ENCODE measurements at regions of chr1 and their contacts with region 1.

Region 1: GRCh38 chr1:193190096-193190744 is 3.8 kb upstream of the B3GALT2 start:
- DNase-seq: no peak
- ATAC-seq: no peak

Region 2: GRCh38 chr1:192998536-192998935 is 191.7 kb before region 1 on chr1:
- intact Hi-C with region 1: no loop called
- DNase-seq: no peak
- ATAC-seq: no peak

Region 3: DNA sequence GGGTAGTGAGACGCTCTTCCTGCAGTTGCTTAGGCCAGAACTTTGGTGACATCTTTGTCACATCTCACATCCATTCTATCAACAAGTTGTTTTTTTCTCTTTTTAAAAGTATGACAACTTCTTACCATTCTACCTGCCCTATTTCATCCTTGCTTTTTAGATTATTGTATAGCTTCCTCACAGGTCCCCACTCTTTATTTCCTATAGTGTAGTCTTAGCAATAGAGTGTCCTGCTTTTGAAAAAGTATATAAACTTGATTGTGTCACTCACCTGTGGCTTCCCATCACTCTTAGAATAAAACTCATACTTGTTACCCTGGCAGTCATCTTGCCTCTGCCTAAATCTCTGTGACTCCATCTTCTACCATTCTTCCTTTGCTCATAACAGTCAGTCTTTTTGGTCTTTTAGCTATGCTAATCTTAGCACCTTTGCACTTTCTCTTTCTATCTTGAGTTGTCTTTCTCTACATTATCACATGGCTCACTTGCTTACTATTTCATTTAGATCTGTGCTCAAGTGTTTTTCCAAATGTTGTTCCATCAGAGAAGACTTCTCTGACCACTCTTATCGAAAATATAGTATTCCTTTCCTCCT is 58.9 kb before region 1 on chr1:
- intact Hi-C with region 1: no loop called
- DNase-seq: no peak
- ATAC-seq: no peak

Region 4: DNA sequence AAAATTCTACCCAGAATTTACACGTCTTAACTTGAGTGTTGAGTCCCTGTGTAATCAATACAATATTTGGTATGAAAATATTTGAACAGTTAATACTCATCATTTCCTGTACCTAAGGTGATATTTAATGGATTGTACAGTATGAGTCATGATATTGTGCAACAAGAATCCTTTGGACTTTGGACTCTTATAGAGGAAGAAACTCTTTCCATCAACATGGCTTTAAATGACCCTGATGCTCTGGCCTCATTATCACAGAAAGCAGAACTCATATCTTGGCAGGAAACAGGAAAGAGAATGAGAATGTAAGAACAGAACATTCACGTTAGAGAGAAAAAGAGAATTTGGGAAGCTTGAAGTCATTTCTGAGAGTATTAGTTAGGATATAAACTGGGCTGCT is 165.0 kb after region 1 on chr1:
- intact Hi-C with region 1: loop called (anchors 5 kb)
- DNase-seq: no peak
- ATAC-seq: no peak